ACHN (cell line): ENCODE measurements at regions of chr2 and their contacts with region 1.

Region 1: DNA sequence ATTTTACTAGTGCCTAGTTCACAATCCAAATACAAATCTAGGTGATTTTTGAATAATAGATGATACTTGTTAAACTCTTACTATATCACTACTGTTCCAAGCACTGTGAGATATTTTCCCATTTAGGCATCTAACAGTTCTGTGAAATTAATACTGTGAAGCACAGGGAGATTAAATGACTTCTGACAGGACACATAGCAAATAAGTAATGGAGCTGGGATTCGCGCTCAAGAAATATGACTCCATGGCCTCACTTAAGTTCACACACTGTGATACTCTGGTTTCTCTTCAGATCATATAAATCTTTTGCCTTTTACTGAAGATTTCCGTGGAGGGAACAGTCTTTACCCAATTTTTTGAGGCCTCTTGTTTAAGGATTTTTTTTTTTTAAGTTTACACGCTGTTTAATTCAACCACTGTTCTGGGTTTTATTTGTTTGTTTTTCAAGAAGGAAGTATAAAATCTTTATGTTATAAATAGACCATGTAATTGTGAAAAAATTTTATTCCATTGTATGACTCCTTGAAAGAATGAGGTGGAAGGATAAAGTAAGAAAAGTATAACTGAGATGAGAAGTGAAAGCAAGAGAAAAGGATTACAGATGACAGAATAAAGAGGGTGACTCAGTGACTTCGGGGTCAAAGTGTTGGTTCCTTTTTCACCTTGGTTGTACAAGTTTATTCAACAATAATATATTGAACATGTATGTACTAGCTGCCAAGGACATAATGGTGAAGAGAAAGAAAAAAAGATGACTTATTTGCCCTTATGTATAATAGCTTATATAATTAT is 30.2 kb downstream of the RBM45 start:
- DNase-seq: no peak

Region 2: GRCh38 chr2:177625744-177626650 is 516.5 kb before region 1 on chr2:
- in situ Hi-C with region 1: no loop called
- DNase-seq: no peak

Region 3: DNA sequence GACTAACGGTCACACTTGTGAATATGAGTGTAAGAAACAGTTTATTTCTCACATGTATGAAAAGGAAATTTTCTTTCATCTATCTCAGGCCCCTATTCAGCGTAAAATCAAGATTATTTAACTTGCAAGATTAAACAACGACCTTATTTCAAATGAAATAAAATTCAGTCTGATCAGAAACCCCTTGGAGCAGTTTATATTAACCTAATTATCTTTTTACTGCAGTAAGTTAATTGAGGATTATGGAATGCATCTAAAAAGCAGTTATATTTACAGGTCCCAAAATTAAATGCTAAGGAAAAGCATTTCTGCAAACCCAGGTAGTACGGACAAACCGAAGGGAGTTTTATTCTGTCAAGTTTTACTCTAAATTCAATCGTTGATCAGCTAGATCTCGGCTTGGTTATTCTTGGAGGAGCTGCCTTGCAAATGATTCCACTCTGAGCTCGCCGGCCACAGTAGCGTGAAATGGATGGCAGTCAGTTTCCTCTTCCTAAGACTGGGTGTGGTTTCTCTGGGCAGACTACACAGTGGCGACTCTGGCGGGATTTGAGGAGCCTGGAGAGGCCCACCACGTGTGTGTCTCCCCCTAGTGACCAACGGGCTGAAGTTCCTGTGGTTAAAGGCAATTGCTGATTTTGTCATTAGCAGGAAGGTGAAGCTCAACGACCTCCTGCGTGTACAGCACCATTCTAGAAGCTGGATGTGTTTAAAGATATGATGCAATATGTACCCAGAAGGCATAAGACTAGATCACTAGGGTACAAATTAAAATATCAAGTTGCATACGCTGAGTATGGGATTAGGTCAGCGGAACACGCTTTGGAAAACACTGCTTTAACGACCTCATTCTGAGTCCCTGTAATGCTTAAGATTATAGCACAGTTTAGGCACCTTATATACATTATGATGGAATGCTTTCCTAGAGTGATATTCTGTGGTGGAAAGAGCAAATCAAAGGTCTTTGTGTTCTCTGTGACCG is 272.1 kb after region 1 on chr2:
- in situ Hi-C with region 1: loop called (anchors 25 kb)
- DNase-seq: peak; percentile 98